ENCODE measurements at regions of chr13 and their contacts with region 1.

Region 1: GRCh38 chr13:45356966-45357672 is 16.1 kb upstream of the TPT1 start:
- DNase-seq: no peak
- ATAC-seq: peak; percentile 27
- H3K4me3 ChIP-seq: no peak overlapping the region
- H3K27ac ChIP-seq: no peak overlapping the region
- H3K4me1 ChIP-seq: peaks cover 13% of the 10 kb centered on the region
- H3K27me3 ChIP-seq: no peaks in the 10 kb centered on the region
- CTCF ChIP-seq: no peak
- EP300 ChIP-seq: no peak
- POLR2A ChIP-seq: no peak
- RAD21 ChIP-seq: no peak

Region 2: DNA sequence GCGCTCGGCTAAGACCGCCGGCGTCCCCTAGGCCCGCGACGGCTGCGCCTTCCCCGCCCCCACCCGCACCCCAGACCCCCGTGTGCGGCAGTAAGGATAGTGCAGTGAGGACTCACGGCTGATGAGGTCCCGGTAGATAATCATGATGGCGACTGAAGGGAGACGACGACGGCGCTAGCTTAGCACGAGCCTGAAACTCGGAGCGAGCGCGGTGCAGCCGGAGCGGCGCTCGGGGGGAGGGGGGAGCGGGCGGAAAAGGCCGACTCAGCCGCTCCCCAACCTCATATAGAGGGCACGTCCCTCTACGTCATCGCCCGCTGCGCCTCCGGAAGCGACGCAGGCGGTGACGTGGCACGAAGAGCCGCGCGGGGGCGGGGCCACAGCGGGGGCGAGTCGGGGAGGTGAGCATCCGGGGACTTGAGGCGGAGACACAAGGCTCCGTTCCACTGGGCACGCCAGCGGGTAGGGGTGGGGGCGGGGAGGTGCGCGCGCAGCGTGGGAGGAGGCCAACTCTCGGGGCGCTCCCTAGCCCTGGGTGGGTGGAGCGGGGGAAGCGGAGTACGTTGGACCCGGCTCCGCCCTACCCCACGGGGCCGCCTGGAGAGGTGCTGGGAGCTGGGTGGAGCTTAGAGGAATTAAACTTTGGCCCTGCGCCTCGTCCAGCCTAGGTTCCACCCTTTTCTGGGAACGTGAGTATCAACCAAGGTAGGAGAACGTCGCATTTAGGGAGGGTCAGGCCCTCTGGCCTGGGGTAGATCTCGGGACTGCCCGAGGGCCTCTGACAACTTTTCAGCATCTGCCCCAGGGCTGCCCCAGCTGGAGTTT is 16.0 kb before region 1 on chr13 and contains the start of gene TPT1:
- CTCF ChIA-PET with region 1: interaction called, 5 read pairs
- POLR2A ChIA-PET with region 1: interaction called, 13 read pairs
- RAD21 ChIA-PET with region 1: interaction called, 6 read pairs
- SMC1A ChIA-PET with region 1: interaction called, 7 read pairs
- in situ Hi-C with region 1: no loop called
- intact Hi-C with region 1: no loop called
- DNase-seq: peak; percentile 96
- ATAC-seq: peak; percentile 93
- H3K4me3 ChIP-seq: peak within 1 kb of the TSS; percentile 90
- H3K27ac ChIP-seq: peak within 1 kb of the TSS; percentile 94
- H3K4me1 ChIP-seq: peaks cover 12% of the 10 kb centered on the region
- H3K27me3 ChIP-seq: no peaks in the 10 kb centered on the region
- CTCF ChIP-seq: no peak
- EP300 ChIP-seq: peak; percentile 25 to 44; a peak in 2 of 4 replicates
- POLR2A ChIP-seq: peak; percentile 99
- RAD21 ChIP-seq: no peak
- polyA plus RNA-seq, gene TPT1: 1,130 to 2,045 TPM

Region 3: DNA sequence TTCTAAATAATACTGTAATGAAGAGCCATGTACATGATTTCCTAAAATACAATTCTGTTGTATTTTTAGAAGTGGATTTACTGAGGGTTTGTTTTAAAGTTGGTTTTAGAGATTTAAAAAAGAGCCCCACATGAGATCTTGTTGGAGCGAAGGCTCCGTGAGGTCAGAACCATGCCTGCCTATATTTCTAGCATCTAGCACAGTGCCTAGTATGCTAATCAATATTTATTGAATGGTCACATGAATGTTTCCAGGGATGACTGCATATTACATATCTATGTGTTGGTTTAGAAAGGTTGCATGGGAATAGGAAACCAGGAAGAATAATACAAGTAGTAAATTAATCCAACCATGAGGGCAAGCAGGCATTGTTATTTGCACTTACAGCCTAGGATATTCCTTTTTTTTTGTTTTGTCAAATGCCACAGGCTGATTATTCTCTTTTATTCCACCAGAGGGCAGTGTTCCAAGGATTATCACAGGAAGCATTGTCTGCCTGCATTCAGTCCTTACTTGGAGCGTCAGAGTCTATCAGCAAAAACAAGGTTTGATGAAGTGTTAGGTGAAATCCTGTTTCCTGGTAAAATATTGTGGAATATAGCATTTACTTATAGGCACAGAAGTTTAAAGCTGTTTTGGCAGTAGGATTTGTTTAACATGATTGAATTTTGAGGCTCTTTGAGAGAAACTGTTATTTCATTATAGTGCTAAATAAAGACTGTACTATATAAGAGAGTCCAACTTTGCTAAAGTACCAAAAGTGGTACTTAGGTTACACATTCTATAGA is 154.4 kb after region 1 on chr13:
- CTCF ChIA-PET with region 1: no interaction called
- POLR2A ChIA-PET with region 1: no interaction called
- RAD21 ChIA-PET with region 1: no interaction called
- SMC1A ChIA-PET with region 1: no interaction called
- in situ Hi-C with region 1: no loop called
- intact Hi-C with region 1: no loop called
- DNase-seq: peak; percentile 24
- ATAC-seq: peak; percentile 85
- H3K4me3 ChIP-seq: no peak overlapping the region
- H3K27ac ChIP-seq: no peak overlapping the region
- H3K4me1 ChIP-seq: no peaks in the 10 kb centered on the region
- H3K27me3 ChIP-seq: no peaks in the 10 kb centered on the region
- CTCF ChIP-seq: peak; percentile 60 to 84 (median 67)
- EP300 ChIP-seq: no peak
- POLR2A ChIP-seq: no peak
- RAD21 ChIP-seq: peak; percentile 58

Measured in GM12878 (cell line).